Activated CD8-positive, alpha-beta memory T cell treated with anti-CD3 and anti-CD28 coated beads, Interleukin-2, amount 10 ng/mL, durations not matched to agents 7 days and 5 days (primary cell): ENCODE measurements at regions of chr2 and their contacts with region 1.

Region 1: GRCh38 chr2:85595301-85596025 is at the start of gene RNF181:
- DNase-seq: peak; percentile 97
- ATAC-seq: peak; percentile 99
- H3K4me3 Mint-ChIP-seq: peak within 1 kb of the TSS; percentile 97
- H3K27ac Mint-ChIP-seq: peak within 1 kb of the TSS; percentile 91
- H3K4me1 Mint-ChIP-seq: peaks cover 31% of the 10 kb centered on the region
- H3K27me3 Mint-ChIP-seq: no peaks in the 10 kb centered on the region
- total RNA-seq, gene RNF181: 100 to 110 TPM

Region 2: GRCh38 chr2:85605406-85606115 is 10.1 kb after region 1 on chr2:
- CTCF ChIA-PET with region 1: interaction called, 13 read pairs
- DNase-seq: no peak
- ATAC-seq: no peak
- H3K4me3 Mint-ChIP-seq: no peak overlapping the region
- H3K27ac Mint-ChIP-seq: no peak overlapping the region
- H3K4me1 Mint-ChIP-seq: peaks cover 22% of the 10 kb centered on the region
- H3K27me3 Mint-ChIP-seq: peaks cover 2% of the 10 kb centered on the region